H1 (cell line): ENCODE measurements at regions of chr3 and their contacts with region 1.

Region 1: DNA sequence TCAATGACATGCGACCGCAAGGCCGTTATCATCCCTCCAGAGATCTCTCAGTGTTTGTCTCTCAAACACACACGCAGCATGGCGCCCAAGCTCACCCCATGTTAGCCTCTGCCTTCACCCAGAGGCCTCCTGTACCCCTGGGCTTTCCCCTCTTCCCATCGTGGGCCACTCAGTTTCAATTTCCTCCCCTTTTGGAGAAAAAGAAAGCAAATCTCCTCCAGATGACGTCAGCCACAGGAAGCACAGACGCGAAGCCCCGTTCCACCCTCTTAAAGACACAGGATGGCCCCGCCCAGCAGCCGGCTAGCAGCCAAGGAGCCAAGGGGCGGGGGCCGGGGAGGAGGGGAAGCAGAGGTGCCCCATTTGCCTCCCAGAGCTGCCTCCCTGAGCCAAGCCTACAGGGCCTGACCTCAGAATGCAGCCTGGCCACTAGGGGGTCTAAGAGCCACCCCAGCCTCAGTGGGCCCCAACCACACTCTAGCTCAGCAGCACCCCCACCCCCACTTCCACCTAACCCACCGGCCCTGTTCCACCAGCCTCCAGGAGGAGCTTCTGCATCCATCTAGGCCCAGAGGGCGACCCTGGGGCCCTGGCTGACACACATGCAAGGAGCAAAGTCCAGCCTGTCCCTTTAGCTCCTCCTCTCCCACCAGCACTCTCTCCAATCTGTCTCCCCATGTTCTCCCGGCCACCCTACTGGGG is 26.5 kb downstream of the ATRIP start:
- DNase-seq: peak; percentile 89 to 94
- H3K4me3 ChIP-seq: peak overlapping the region; percentile 54 to 79 (median 69)
- H3K27ac ChIP-seq: peak overlapping the region; percentile 97
- H3K4me1 ChIP-seq: peaks cover 0 to 28% (median 19%) of the 10 kb centered on the region in 4 experiments; a peak in 6 of 7 replicates
- H3K27me3 ChIP-seq: no peaks in the 10 kb centered on the region
- CTCF ChIP-seq: peak in 2 of 3 experiments; percentile 56 to 65; a peak in 3 of 4 replicates
- EP300 ChIP-seq: no peak
- POLR2A ChIP-seq: peak in 1 of 2 experiments; percentile 87; a peak in 1 of 3 replicates
- RAD21 ChIP-seq: peak; percentile 27 to 43; a peak in 3 of 4 replicates

Region 2: DNA sequence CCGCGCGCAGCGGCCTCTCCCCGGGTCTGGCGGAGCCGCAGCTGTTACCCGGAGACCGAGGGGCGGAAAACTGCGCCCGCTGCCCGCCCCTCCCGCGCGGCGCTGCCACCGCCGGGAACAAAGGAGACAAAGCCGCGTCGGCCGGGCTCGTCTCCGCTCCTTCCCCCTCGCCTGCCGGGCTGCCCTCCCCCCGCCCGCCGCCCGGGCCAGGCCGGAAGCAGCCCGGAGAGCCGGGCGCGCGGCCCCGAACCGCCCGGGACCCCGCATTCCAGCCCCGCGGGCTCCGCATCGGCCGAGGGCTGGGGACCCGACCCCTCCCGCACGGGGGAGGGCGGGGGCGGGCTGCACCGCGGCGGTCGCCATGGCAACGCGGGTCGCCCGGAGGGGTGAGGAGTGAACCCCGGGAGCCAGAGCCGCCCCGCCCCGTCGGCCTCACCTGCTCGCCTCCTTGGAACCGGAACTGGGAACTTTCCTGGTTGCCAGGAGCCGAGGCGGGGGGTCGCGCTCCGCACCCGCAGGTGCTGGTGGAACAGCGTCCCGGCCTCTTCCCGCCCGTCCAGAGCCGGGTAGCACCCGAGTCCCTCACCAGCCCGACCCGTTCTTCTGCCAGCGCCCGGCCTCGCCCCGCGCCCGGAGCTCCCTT is 43.6 kb before region 1 on chr3:
- CTCF ChIA-PET with region 1: interaction called, 4 read pairs
- POLR2A ChIA-PET with region 1: interaction called, 36 read pairs
- DNase-seq: peak in 1 of 2 experiments; percentile 90
- H3K4me3 ChIP-seq: peak overlapping the region; percentile 66 to 85 (median 76)
- H3K27ac ChIP-seq: peak overlapping the region; percentile 94
- H3K4me1 ChIP-seq: peaks cover 7 to 37% (median 22%) of the 10 kb centered on the region in 4 experiments
- H3K27me3 ChIP-seq: no peaks in the 10 kb centered on the region
- CTCF ChIP-seq: no peak
- EP300 ChIP-seq: no peak
- POLR2A ChIP-seq: peak in 1 of 2 experiments; percentile 55; a peak in 2 of 3 replicates
- RAD21 ChIP-seq: no peak

Region 3: DNA sequence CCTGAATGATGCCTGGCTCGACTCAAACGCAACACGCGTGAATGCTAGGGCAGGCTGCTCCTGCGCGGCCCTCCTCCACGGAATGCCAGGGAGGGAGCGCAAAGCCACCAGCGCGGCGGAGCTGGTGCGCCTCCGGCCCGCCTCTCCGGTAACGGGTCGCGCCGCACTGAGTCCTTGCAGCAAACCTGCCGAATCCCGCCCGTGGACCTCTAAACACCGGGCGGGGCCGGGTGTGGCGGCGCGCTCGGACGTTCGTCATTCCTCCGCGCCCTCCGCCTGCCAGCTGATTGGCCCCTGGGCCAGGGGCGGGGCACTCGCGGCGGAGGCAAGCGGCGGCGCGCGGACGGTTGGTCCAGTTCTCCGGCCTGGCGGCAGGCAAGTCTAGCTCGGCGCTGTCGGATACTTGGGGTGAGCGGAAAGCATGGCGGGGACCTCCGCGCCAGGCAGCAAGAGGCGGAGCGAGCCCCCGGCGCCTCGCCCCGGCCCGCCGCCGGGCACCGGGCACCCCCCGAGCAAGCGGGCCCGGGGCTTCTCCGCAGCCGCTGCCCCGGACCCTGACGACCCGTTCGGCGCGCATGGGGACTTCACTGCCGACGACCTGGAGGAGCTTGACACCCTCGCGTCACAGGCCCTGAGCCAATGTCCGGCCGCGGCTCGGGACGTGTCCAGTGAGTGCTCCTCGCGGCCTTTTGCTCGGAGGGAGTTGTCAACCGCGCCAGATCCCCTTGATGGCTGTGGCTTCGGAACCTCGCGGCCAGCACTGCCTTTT is 26.5 kb before region 1 on chr3 and contains the start of gene ATRIP:
- CTCF ChIA-PET with region 1: interaction called, 4 read pairs
- POLR2A ChIA-PET with region 1: interaction called, 13 read pairs
- DNase-seq: peak in 1 of 2 experiments; percentile 95
- H3K4me3 ChIP-seq: peak within 1 kb of the TSS; percentile 80 to 98 (median 96)
- H3K27ac ChIP-seq: peak within 1 kb of the TSS; percentile 66
- H3K4me1 ChIP-seq: peaks cover 3 to 15% (median 6%) of the 10 kb centered on the region in 4 experiments; a peak in 5 of 7 replicates
- H3K27me3 ChIP-seq: no peaks in the 10 kb centered on the region
- CTCF ChIP-seq: no peak
- EP300 ChIP-seq: peak in 1 of 2 experiments; percentile 35; a peak in 1 of 3 replicates
- POLR2A ChIP-seq: peak; percentile 81 to 97
- RAD21 ChIP-seq: no peak
- total RNA-seq, gene ATRIP: 16.7 and 20.2 TPM in 2 replicates

Region 4: DNA sequence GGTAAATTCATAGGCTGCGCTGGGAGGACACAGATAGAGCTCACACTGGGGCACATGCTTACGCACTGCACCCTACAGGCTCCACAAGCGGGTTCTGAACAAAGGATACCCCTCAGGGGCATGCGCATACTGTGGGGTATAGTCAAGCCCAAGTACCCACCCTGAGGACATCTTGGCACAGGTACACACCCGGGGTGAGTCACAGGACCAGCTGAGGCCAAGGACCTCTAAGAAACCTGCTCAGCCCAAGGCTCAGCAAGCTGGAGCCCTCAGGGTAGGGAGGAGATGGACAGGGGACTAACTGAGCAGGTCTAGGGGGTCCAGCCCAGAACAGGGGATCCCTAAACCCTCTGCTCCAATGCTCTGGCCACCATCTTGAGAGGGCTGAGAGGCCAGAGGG is 27.6 kb after region 1 on chr3:
- CTCF ChIA-PET with region 1: interaction called, 251 read pairs
- POLR2A ChIA-PET with region 1: interaction called, 21 read pairs
- DNase-seq: peak in 1 of 2 experiments; percentile 42
- H3K4me3 ChIP-seq: no peak overlapping the region
- H3K27ac ChIP-seq: 0 out of 2 replicates have a peak overlapping the region, but pooled peaks have one; percentile 30
- H3K4me1 ChIP-seq: peaks cover 0 to 14% (median 10%) of the 10 kb centered on the region in 4 experiments; a peak in 6 of 7 replicates
- H3K27me3 ChIP-seq: peaks cover 0 to 3% (median 0%) of the 10 kb centered on the region in 4 experiments; a peak in 2 of 7 replicates
- CTCF ChIP-seq: no peak
- EP300 ChIP-seq: no peak
- POLR2A ChIP-seq: no peak
- RAD21 ChIP-seq: no peak

Region 5: GRCh38 chr3:48507351-48508061 is 34.4 kb after region 1 on chr3:
- CTCF ChIA-PET with region 1: interaction called, 251 read pairs
- POLR2A ChIA-PET with region 1: interaction called, 42 read pairs
- DNase-seq: peak; percentile 75 to 80
- H3K4me3 ChIP-seq: no peak overlapping the region
- H3K27ac ChIP-seq: 0 out of 2 replicates have a peak overlapping the region, but pooled peaks have one; percentile 2
- H3K4me1 ChIP-seq: peaks cover 4 to 14% (median 12%) of the 10 kb centered on the region in 4 experiments
- H3K27me3 ChIP-seq: peaks cover 0 to 3% (median 0%) of the 10 kb centered on the region in 4 experiments; a peak in 2 of 7 replicates
- CTCF ChIP-seq: peak in 2 of 3 experiments; percentile 90 to 95; a peak in 3 of 4 replicates
- EP300 ChIP-seq: no peak; a peak in 1 of 3 replicates
- POLR2A ChIP-seq: no peak
- RAD21 ChIP-seq: peak; percentile 93 to 95

Region 6: DNA sequence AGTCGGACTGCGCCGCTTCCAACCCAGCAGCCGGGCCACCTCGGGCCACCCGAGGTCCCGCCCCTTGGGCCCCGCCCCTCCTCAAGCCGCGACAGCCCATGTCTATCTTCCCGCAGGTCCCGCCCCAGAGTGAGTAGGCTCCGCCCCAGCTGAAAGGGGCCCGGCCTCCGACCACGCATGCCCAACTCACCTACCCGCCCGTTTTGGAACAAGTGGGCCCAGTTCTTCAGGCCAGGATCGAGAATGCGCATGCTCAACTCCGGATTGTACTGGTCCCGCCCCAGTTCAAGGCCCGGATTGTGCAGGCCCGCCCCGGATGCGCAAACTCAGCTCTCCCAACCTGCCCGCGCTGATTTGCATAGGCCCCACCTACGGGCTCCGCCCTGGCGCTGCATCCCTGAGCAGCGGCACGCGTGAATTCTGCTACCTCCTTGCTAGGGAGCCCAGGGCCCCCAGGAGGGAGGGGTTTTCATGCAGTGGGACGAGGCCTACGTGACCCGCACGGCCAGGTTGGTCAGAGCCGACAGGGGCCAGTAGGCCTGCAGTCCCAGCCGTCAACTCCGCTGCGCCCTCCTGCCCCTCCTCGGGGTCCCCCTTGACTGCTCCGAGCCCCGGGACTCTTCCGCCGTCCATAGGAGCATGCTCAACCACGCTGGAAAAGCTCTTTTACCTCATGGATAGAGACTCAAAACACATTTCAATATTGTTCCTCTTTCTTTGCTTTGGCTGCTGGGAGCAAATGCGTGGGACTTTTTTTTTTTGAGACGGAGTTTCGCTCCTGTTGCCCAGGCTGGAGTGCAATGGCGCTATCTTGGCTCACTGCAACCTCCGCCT is 83.9 kb after region 1 on chr3 and contains the start of gene PFKFB4:
- CTCF ChIA-PET with region 1: interaction called, 52 read pairs
- POLR2A ChIA-PET with region 1: interaction called, 34 read pairs
- DNase-seq: peak; percentile 99 to 100
- H3K4me3 ChIP-seq: peak within 1 kb of the TSS; percentile 67 to 90 (median 73)
- H3K27ac ChIP-seq: peak within 1 kb of the TSS; percentile 67
- H3K4me1 ChIP-seq: peaks cover 4 to 33% (median 22%) of the 10 kb centered on the region in 4 experiments
- H3K27me3 ChIP-seq: no peaks in the 10 kb centered on the region
- CTCF ChIP-seq: peak in 1 of 3 experiments; percentile 36; a peak in 1 of 4 replicates
- EP300 ChIP-seq: no peak
- POLR2A ChIP-seq: peak in 1 of 2 experiments; percentile 82; a peak in 2 of 3 replicates
- RAD21 ChIP-seq: no peak
- total RNA-seq, gene PFKFB4: 10.7 and 11.3 TPM in 2 replicates

Region 7: DNA sequence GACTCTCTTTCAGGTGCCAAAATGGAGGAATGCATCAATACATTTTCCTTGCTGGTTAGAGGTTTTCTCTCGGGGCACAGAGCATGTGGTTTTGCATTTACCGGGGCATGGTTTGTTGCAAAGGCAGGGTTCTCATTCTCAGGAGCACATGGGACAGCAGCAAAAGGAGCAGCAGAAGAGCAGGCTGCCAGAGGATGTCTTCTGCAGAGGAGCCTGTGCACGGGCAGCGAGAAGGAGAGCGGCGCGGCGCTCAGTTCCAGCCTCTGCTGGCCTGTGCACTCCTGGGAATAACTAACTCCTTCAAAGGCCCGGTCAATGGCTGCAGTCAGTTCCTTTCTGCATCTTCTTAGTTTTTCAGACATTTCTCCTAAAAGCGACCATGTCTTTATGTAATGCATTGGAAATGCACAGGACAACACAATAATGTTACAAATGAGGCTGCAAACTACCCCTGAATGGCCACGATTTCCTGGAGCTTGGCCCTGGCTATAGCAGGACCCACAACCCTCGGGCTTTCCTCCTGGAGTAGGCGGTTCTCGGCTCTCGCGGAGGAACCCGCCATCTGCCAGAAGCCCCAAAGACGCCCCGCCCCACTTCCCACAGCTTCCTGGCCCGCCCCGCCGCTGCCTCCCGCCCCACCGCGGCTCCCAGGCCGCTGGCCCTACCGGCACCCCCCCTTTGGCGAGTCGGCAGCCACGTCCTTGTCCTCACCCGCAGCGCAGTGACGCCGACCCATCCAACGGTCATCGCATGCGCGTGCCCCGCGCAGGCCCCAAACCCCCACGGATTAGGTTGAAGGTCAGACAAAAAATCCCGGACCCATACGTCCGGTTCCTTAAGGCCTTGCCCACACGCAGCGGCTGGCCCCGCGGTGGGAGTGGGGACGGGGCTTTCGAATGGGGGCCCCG is 803.7 kb after region 1 on chr3 and contains the start of gene C3orf62:
- CTCF ChIA-PET with region 1: no interaction called
- POLR2A ChIA-PET with region 1: no interaction called
- DNase-seq: peak; percentile 34 to 73
- H3K4me3 ChIP-seq: peak within 1 kb of the TSS; percentile 25 to 55 (median 36)
- H3K27ac ChIP-seq: peak within 1 kb of the TSS; percentile 30; the same call in 1 of the 2 replicates
- H3K4me1 ChIP-seq: peaks cover 0 to 4% (median 1%) of the 10 kb centered on the region in 4 experiments; a peak in 3 of 7 replicates
- H3K27me3 ChIP-seq: no peaks in the 10 kb centered on the region
- CTCF ChIP-seq: no peak
- EP300 ChIP-seq: no peak
- POLR2A ChIP-seq: peak; percentile 39 to 51
- RAD21 ChIP-seq: no peak
- total RNA-seq, gene C3orf62: 3.0 and 3.2 TPM in 2 replicates